ENCODE measurements at regions of chr5 and their contacts with region 1.

Region 1: DNA sequence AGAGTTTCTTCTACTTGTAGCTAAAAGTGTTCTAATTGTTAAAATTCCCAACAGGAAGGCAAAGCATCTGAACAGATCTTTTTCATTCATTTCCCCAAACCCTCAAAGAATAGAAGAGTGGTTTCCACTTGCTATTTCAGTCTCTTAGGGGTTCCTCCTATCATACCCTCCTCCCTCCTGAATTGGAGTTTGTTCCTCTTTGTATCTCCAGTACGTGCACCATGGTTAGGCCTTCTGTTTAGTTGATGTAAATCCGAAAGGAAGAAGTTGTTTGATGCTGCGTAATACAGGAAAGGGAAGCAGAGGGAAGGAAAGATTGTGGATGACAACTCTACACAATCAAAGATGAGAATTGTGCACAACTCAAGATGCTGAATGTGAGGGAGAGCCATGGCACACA is 303.6 kb downstream of the PIK3R1 start:
- DNase-seq: no peak
- H3K4me3 ChIP-seq: no peak overlapping the region
- H3K27ac ChIP-seq: no peak overlapping the region
- H3K4me1 ChIP-seq: no peaks in the 10 kb centered on the region
- H3K27me3 ChIP-seq: no peaks in the 10 kb centered on the region
- CTCF ChIP-seq: no peak
- EP300 ChIP-seq: no peak
- POLR2A ChIP-seq: no peak

Region 2: DNA sequence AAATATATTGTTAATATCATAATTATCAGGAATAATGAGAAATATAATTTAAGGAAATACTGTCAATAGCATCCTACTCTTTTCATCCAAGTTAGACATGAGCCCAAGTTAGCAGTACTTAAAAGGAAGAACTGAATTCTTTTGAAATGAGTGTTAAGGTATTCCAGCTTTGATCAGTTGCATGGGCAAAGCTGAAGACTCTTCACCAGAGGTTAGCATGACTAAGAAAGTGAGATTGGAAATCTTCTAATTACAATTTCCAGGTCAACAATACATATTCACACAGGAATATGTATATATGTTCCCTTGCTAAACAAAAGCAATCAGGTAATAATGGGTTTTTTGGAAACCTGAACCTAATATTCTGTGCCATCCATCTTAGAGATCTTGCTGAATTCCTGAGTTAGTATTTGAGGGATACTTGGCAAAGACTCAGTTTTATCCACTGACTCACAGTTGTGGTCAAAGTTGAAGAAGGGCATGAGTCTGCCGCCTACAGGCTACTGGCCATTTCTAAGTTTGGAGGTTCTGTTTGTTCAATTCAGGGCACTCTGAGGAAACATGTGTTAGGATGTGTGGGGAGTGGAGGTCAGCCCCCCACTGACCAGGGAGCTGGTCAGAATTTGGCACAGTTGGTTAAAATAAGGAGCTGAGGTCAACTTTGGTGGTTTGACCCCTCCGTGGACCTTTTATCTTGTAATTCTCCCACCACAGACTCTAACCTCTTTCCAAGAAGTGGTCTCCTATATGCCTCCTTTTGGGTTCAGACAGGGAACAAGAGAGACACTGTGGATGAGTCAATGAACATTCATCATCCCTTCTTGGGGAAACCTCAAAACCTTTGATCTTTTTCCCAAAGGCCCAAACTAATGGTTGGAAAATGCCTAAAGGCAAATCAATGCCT is 185.2 kb before region 1 on chr5:
- in situ Hi-C with region 1: no loop called
- intact Hi-C with region 1: no loop called
- DNase-seq: no peak
- H3K4me3 ChIP-seq: no peak overlapping the region
- H3K27ac ChIP-seq: no peak overlapping the region
- H3K4me1 ChIP-seq: peaks cover 7 to 28% (median 19%) of the 10 kb centered on the region in 4 donors
- H3K27me3 ChIP-seq: no peaks in the 10 kb centered on the region
- CTCF ChIP-seq: no peak
- EP300 ChIP-seq: no peak
- POLR2A ChIP-seq: no peak

Region 3: GRCh38 chr5:68478301-68479095 is 40.6 kb before region 1 on chr5:
- in situ Hi-C with region 1: no loop called
- intact Hi-C with region 1: loop called (anchors 1 kb)
- DNase-seq: no peak
- H3K4me3 ChIP-seq: no peak overlapping the region
- H3K27ac ChIP-seq: peak overlapping the region in 3 of 4 donors; percentile 22 to 69 (median 39)
- H3K4me1 ChIP-seq: peaks cover 4 to 11% (median 5%) of the 10 kb centered on the region in 4 donors
- H3K27me3 ChIP-seq: no peaks in the 10 kb centered on the region
- CTCF ChIP-seq: no peak
- EP300 ChIP-seq: no peak
- POLR2A ChIP-seq: no peak

Measured in transverse colon (tissue), 4 donors.